K562 (cell line): ENCODE measurements at regions of chr17 and their contacts with region 1.

Region 1: GRCh38 chr17:44123356-44124117 is at the start of gene HDAC5:
- DNase-seq: peak; percentile 95 to 96 (median 96)
- ATAC-seq: peak; percentile 95
- H3K4me3 ChIP-seq: peak within 1 kb of the TSS; percentile 93
- H3K27ac ChIP-seq: peak within 1 kb of the TSS; percentile 96
- H3K4me1 ChIP-seq: peaks cover 10 to 32% of the 10 kb centered on the region in 2 experiments; a peak in 4 of 5 replicates
- H3K27me3 ChIP-seq: no peaks in the 10 kb centered on the region; a peak in 1 of 5 replicates
- CTCF ChIP-seq: peak; percentile 78 to 85 (median 80)
- EP300 ChIP-seq: peak; percentile 43
- POLR2A ChIP-seq: peak; percentile 71
- RAD21 ChIP-seq: peak; percentile 51 to 58
- polyA plus RNA-seq, gene HDAC5: 0.45 to 0.73 TPM

Region 2: GRCh38 chr17:44093270-44093900 is 30.2 kb before region 1 on chr17:
- CTCF ChIA-PET with region 1: no interaction called
- POLR2A ChIA-PET with region 1: no interaction called
- in situ Hi-C with region 1: no loop called
- intact Hi-C with region 1: no loop called
- DNase-seq: no peak
- ATAC-seq: no peak
- H3K4me3 ChIP-seq: no peak overlapping the region
- H3K27ac ChIP-seq: no peak overlapping the region
- H3K4me1 ChIP-seq: peaks cover 33 to 53% of the 10 kb centered on the region in 2 experiments
- H3K27me3 ChIP-seq: no peaks in the 10 kb centered on the region
- CTCF ChIP-seq: no peak
- EP300 ChIP-seq: no peak
- POLR2A ChIP-seq: no peak
- RAD21 ChIP-seq: no peak

Region 3: DNA sequence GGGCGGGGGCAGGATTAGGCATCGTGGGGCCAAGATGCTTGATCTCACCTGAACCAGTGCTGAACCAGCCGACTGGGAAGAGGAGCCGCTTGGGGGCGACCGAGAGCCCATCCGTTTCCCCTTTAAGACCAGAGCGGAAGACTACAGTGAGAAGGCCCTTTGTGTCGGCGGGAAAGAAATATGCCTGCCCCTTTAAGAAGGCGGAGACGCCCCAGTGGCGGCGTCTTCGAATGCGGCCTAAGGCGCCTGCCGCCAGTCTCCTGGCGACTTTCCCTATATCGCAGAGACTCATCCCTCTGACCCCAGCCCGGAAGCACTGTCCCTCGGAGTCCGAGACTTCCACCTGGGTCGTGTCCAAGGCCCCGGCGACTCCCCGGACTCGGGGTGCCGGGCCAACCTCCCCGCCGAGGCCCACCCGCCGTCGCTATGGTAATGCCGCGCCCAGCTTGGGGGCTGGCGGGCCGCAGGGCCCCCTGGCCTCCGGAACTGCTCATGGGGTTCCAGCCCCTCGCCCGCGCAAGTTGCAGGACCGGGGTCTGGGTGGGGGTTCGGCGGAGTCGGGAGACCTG is 18.3 kb after region 1 on chr17 and contains the start of gene HROB:
- CTCF ChIA-PET with region 1: interaction called, 4 read pairs
- POLR2A ChIA-PET with region 1: interaction called, 6 read pairs
- in situ Hi-C with region 1: no loop called
- intact Hi-C with region 1: loop called (anchors 1 kb)
- DNase-seq: peak; percentile 82 to 99 (median 86)
- ATAC-seq: peak; percentile 85
- H3K4me3 ChIP-seq: peak within 1 kb of the TSS; percentile 94
- H3K27ac ChIP-seq: peak within 1 kb of the TSS; percentile 95
- H3K4me1 ChIP-seq: peaks cover 31 to 39% of the 10 kb centered on the region in 2 experiments
- H3K27me3 ChIP-seq: no peaks in the 10 kb centered on the region
- CTCF ChIP-seq: peak; percentile 90 to 97 (median 96)
- EP300 ChIP-seq: no peak
- POLR2A ChIP-seq: peak; percentile 83
- RAD21 ChIP-seq: peak; percentile 47 to 60
- polyA plus RNA-seq, gene HROB: 6.6 to 6.7 TPM